ENCODE measurements at regions of chr20 and their contacts with region 1.

Region 1: GRCh38 chr20:54199721-54200176 is 8.1 kb upstream of the PFDN4 start:
- DNase-seq: peak; percentile 67 to 91 (median 80)
- H3K4me3 ChIP-seq: no peak overlapping the region
- H3K27ac ChIP-seq: no peak overlapping the region
- H3K27me3 ChIP-seq: no peaks in the 10 kb centered on the region
- CTCF ChIP-seq: peak; percentile 73 to 98 (median 89)

Region 2: DNA sequence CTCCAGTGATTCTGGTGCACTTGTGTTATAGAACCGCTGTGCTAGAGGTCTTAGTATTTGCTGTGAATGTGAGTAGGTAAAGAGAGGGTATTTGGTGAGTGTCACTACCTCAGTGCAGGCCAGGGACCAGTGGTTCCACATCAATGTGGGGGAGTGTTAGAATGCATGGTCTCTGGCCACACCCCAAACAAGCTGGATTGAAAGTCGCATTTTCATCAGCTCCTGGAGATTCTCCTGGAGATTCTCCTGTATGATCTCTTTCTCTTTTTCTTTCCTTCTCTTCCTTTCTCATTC is 102.6 kb before region 1 on chr20:
- intact Hi-C with region 1: loop called (anchors 2 to 5 kb)
- DNase-seq: no peak
- H3K4me3 ChIP-seq: no peak overlapping the region
- H3K27ac ChIP-seq: no peak overlapping the region
- H3K27me3 ChIP-seq: peaks cover 0 to 33% (median 0%) of the 10 kb centered on the region in 45 donors
- CTCF ChIP-seq: no peak

Region 3: DNA sequence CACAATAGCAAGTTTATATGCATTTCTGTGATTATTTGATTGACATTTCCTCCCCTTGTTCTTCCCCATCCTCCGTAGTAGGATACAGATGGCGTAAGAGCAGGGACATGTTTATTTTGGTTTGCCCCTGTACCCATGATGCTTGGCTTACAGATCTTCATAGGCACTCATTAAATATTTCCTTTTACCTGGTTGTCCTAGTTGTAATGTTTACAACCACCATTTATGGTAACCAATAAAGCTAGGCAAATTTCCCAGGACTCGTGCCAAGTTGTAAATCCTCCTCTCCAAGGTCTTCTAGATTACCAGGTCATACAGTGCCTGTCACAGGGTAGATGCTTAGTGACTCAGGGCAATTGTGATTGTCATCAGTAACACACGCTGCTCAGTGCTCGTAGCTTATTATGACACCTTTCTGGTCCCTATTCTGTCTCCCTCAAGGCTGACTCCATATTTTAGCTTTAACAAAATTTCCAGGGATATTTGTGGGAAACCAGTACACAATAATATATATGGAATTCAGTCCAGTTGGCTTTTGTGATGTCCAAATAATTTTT is 50.7 kb before region 1 on chr20:
- intact Hi-C with region 1: no loop called
- DNase-seq: no peak
- H3K4me3 ChIP-seq: no peak overlapping the region
- H3K27ac ChIP-seq: no peak overlapping the region
- H3K27me3 ChIP-seq: peaks cover 0 to 13% (median 0%) of the 10 kb centered on the region in 45 donors
- CTCF ChIP-seq: no peak

Measured in dorsolateral prefrontal cortex (tissue), 120 donors.